PC-9 (cell line): ENCODE measurements at regions of chr3 and their contacts with region 1.

Region 1: GRCh38 chr3:194512895-194513601 is 26.2 kb upstream of the ATP13A3 start:
- DNase-seq: peak; percentile 96 to 99
- H3K4me3 ChIP-seq: no peak overlapping the region
- H3K27ac ChIP-seq: peak overlapping the region; percentile 56
- H3K4me1 ChIP-seq: peaks cover 45% of the 10 kb centered on the region
- H3K27me3 ChIP-seq: no peaks in the 10 kb centered on the region
- CTCF ChIP-seq: no peak

Region 2: GRCh38 chr3:193157051-193157450 is 1356.0 kb before region 1 on chr3:
- CTCF ChIA-PET with region 1: no interaction called
- POLR2A ChIA-PET with region 1: no interaction called
- intact Hi-C with region 1: no loop called
- DNase-seq: no peak
- H3K4me3 ChIP-seq: no peak overlapping the region
- H3K27ac ChIP-seq: no peak overlapping the region
- H3K4me1 ChIP-seq: no peaks in the 10 kb centered on the region
- H3K27me3 ChIP-seq: peaks cover 28% of the 10 kb centered on the region
- CTCF ChIP-seq: no peak

Region 3: DNA sequence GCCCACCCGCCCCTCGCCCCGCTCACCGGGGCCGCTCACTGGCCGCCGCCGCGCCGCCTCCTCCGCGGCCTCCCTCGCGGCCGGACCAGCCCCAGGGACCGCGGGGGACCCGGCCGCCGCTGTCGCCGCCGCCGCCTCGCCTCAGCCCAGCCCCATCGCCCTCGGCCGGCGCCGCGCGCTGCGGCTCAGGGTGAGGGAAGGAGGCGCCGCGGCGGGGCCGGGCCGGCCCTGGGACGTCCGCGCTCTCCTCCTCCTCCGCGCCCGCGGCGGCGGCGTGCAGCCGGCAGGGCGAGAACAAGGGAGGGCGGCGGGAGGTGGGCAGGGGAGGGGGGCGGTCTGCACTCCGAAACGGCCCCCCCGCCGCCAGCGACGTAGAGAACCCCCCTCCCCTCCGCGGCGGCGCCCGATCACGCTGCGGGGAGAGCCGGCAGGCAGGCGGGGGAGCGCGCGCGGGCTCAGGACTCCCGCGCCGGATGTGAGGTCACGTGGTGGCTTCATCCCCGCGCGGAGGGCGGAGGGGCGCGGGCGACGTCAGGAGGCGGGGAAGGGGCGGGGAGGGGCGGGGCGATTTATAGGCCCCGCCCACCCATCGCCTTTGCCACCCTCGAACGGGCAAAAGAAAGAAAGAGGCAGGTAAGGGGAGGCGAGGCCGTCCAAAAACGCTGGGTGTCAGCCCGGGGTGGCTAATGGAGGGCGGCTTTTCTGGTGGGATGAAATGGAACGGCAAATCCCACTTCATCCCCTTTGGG is 26.3 kb before region 1 on chr3 and contains the start of gene ATP13A3:
- CTCF ChIA-PET with region 1: interaction called, 4 read pairs
- POLR2A ChIA-PET with region 1: no interaction called
- intact Hi-C with region 1: loop called (anchors 1 kb)
- DNase-seq: peak; percentile 80 to 93
- H3K4me3 ChIP-seq: peak within 1 kb of the TSS; percentile 64
- H3K27ac ChIP-seq: peak within 1 kb of the TSS; percentile 96
- H3K4me1 ChIP-seq: peaks cover 71% of the 10 kb centered on the region
- H3K27me3 ChIP-seq: no peaks in the 10 kb centered on the region
- CTCF ChIP-seq: no peak
- total RNA-seq, gene ATP13A3: 203 and 242 TPM in 2 replicates

Region 4: GRCh38 chr3:194497821-194498598 is 15.0 kb before region 1 on chr3:
- CTCF ChIA-PET with region 1: interaction called, 4 read pairs
- POLR2A ChIA-PET with region 1: interaction called, 14 read pairs
- intact Hi-C with region 1: loop called (anchors 1 kb)
- DNase-seq: peak; percentile 58 to 93
- H3K4me3 ChIP-seq: no peak overlapping the region
- H3K27ac ChIP-seq: peak overlapping the region; percentile 45
- H3K4me1 ChIP-seq: peaks cover 60% of the 10 kb centered on the region
- H3K27me3 ChIP-seq: no peaks in the 10 kb centered on the region
- CTCF ChIP-seq: no peak

Region 5: DNA sequence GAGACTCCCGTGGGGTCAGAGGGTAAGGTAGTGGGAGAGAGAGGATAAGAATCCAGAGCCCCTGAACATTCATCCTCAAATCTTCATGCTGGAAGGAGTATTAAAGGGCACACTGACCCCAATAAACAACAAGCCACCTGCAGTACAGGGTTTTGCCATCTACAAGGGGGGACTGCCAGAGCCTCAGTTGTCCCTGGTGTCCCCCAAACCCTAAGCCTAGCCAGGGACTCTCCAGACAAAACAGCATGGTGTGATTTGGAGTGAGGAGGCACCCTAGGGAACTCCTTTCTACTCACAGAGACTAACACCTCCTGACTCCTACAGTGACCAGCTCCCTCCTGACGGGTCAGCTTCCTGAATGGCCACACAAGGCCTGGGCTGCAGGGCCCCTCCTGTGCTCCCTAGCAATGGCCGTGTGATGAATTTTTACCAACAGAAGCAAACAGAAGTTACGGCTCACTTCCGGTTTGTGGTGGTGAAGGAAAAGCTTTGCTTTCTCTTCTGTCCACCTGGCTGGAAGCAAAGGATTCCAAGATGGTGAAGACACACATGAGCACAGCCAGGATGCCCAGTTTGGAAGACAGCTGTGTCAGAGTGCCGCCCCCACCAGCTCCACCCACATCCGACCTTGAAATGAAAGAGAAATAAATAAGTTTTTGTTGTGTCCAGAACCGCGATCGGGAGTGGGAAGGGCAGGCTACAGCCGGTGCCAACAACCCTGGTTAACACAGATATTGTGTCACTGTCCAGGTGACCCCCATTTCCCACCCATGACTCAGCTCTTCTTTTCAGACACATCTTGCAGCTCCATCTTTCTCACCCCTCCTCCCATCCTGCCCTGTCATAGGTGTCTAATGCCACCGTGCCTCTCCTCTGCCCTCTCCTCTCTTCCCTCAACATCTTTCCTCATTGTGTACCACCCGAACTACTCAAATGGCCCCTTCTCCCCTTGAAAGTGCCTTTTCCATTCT is 43.3 kb after region 1 on chr3:
- CTCF ChIA-PET with region 1: no interaction called
- POLR2A ChIA-PET with region 1: interaction called, 22 read pairs
- intact Hi-C with region 1: loop called (anchors 1 kb)
- DNase-seq: peak in 1 of 2 experiments; percentile 46
- H3K4me3 ChIP-seq: no peak overlapping the region
- H3K27ac ChIP-seq: no peak overlapping the region
- H3K4me1 ChIP-seq: peaks cover 8% of the 10 kb centered on the region
- H3K27me3 ChIP-seq: no peaks in the 10 kb centered on the region
- CTCF ChIP-seq: no peak

Region 6: DNA sequence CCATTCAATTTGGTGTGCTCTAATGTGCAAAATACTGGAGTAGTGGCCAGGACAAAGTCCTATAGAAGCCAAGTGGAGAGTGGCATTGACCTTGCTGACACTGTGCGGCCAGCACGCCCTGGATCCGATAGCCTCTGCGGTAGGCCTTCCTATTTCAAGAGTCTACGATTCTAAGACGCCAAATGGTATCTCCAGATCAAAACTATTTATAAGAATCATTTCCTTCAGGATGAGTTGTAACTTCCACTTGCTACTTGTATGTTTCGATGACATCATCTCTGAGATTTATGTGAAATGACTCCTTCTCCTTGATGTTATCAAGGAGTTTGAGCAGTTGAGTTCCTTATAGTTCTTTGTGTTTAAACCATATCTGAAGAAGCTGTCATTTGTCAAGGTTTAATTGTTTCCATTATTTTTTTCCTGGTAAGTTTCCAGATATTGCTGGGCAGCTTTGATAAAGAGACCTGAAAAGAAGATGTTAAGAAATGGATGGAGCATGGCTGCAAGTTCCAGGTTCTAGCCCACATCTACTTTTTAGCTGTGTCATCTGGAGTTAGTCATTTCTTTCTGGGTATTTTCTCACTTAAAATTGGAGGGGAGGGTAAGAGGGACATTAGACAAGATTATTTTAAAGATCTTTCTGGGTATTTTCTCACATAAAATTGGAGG is 48.4 kb after region 1 on chr3:
- CTCF ChIA-PET with region 1: no interaction called
- POLR2A ChIA-PET with region 1: no interaction called
- intact Hi-C with region 1: loop called (anchors 1 kb)
- DNase-seq: peak; percentile 69 to 96
- H3K4me3 ChIP-seq: no peak overlapping the region
- H3K27ac ChIP-seq: peak overlapping the region; percentile 69
- H3K4me1 ChIP-seq: peaks cover 17% of the 10 kb centered on the region
- H3K27me3 ChIP-seq: no peaks in the 10 kb centered on the region
- CTCF ChIP-seq: no peak

Region 7: GRCh38 chr3:194583604-194584318 is 70.7 kb after region 1 on chr3:
- CTCF ChIA-PET with region 1: interaction called, 5 read pairs
- POLR2A ChIA-PET with region 1: interaction called, 6 read pairs
- intact Hi-C with region 1: loop called (anchors 1 kb)
- DNase-seq: peak; percentile 90 to 96
- H3K4me3 ChIP-seq: peak overlapping the region; percentile 70
- H3K27ac ChIP-seq: peak overlapping the region; percentile 93
- H3K4me1 ChIP-seq: peaks cover 22% of the 10 kb centered on the region
- H3K27me3 ChIP-seq: no peaks in the 10 kb centered on the region
- CTCF ChIP-seq: no peak

Region 8: GRCh38 chr3:195863121-195864006 is 1350.3 kb after region 1 on chr3:
- CTCF ChIA-PET with region 1: no interaction called
- POLR2A ChIA-PET with region 1: no interaction called
- intact Hi-C with region 1: no loop called
- DNase-seq: peak; percentile 78 to 95
- H3K4me3 ChIP-seq: no peak overlapping the region
- H3K27ac ChIP-seq: peak overlapping the region; percentile 23; the same call in 1 of the 2 replicates
- H3K4me1 ChIP-seq: peaks cover 18% of the 10 kb centered on the region
- H3K27me3 ChIP-seq: no peaks in the 10 kb centered on the region
- CTCF ChIP-seq: peak; percentile 95